Naive thymus-derived CD4-positive, alpha-beta T cell (primary cell): ENCODE measurements at regions of chr17 and their contacts with region 1.

Region 1: GRCh38 chr17:3845621-3846441 is at the start of gene NCBP3:
- DNase-seq: peak; percentile 79 to 98 (median 90)
- ATAC-seq: peak; percentile 98
- H3K4me3 ChIP-seq: peak within 1 kb of the TSS; percentile 83
- H3K4me3 Mint-ChIP-seq: peak within 1 kb of the TSS; percentile 85 to 98 (median 90)
- H3K27ac ChIP-seq: peak within 1 kb of the TSS; percentile 90
- H3K27ac Mint-ChIP-seq: peak within 1 kb of the TSS; percentile 59 to 95 (median 88)
- H3K4me1 ChIP-seq: peaks cover 12 to 17% of the 10 kb centered on the region in 2 donors
- H3K4me1 Mint-ChIP-seq: peaks cover 18 to 33% (median 24%) of the 10 kb centered on the region in 7 donors
- H3K27me3 ChIP-seq: no peaks in the 10 kb centered on the region
- H3K27me3 Mint-ChIP-seq: peaks cover 0 to 13% (median 0%) of the 10 kb centered on the region in 5 donors
- total RNA-seq, gene NCBP3: 40.6 to 49.4 (median 46.7) TPM

Region 2: DNA sequence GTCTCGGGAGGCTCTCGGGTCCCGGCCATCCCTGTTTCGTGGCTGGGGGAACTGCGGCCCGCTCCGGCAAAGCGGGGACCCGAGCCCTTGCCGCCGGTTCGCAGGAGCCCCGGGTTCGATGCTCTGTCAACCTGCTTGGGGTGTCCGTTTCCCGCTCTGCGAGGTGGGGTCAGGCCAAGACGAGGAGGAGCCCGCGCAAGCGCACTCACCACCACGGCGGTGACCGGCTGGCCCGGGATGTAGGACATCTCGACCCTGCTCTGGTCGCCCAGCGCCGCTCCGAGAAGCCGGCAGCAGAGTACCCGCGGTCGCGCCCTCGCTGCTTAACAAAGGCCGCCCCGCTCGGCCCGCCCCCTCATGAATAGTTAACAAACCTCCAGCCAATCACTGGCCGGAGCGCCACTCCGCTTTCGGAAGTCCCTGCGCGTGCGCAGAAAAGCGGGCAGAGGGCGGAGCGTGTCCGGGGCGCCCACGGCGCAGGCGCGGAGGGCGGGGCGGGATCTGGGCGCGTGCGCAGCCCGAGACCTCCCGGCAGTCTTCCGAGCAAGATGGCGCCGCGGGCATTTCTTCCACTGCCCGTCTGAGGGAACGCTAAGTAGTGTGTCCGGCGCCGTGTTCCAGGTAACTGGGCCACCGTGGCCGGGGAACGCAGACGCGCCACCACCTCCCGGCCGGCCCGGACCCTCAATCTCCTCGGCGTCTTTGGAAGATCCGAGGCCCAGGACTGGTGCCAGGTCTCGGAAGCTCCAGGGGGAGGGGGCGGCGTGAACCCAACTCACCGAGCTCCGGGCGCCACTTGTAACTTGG is 177.3 kb before region 1 on chr17 and contains the starts of genes EMC6 and TAX1BP3:
- CTCF ChIA-PET with region 1: no interaction called
- POLR2A ChIA-PET with region 1: no interaction called
- intact Hi-C with region 1: loop called (anchors 1 kb)
- DNase-seq: peak; percentile 97 to 100 (median 100)
- ATAC-seq: peak; percentile 96
- H3K4me3 ChIP-seq: peak within 1 kb of the TSS; percentile 91
- H3K4me3 Mint-ChIP-seq: peak within 1 kb of the TSS; percentile 82 to 94 (median 91)
- H3K27ac ChIP-seq: peak within 1 kb of the TSS; percentile 76
- H3K27ac Mint-ChIP-seq: peak within 1 kb of the TSS; percentile 63 to 93 (median 85)
- H3K4me1 ChIP-seq: peaks cover 8 to 17% of the 10 kb centered on the region in 2 donors
- H3K4me1 Mint-ChIP-seq: peaks cover 21 to 43% (median 30%) of the 10 kb centered on the region in 7 donors
- H3K27me3 ChIP-seq: no peaks in the 10 kb centered on the region
- H3K27me3 Mint-ChIP-seq: peaks cover 0 to 2% (median 0%) of the 10 kb centered on the region in 5 donors
- total RNA-seq, gene EMC6: 23.1 to 39.0 (median 31.2) TPM
- total RNA-seq, gene TAX1BP3: 10.5 to 28.4 (median 11.7) TPM

Region 3: DNA sequence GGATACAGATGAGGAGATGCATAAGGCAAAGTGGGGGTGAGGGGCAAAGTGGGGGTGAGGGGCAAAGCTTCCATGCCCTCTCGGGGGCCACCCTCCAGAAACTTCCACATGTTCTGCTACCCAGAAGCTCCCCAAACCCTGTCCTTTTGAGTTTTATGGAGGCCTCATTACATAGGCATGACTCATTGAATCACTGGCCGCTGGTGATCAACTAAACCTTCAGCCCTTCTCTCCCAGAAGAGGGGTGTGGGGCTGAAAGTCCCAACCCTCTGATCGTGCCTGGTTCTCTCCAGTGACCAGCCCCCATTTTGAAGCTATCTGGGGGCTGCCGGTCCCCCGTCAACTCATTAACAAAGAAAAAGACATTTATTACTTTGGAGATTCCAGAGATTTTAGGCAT is 72.3 kb before region 1 on chr17:
- CTCF ChIA-PET with region 1: no interaction called
- POLR2A ChIA-PET with region 1: no interaction called
- intact Hi-C with region 1: no loop called
- DNase-seq: no peak
- ATAC-seq: no peak
- H3K4me3 ChIP-seq: no peak overlapping the region
- H3K4me3 Mint-ChIP-seq: no peak overlapping the region
- H3K27ac ChIP-seq: no peak overlapping the region
- H3K27ac Mint-ChIP-seq: no peak overlapping the region
- H3K4me1 ChIP-seq: peaks cover 8 to 36% of the 10 kb centered on the region in 2 donors
- H3K4me1 Mint-ChIP-seq: peaks cover 10 to 38% (median 25%) of the 10 kb centered on the region in 7 donors
- H3K27me3 ChIP-seq: no peaks in the 10 kb centered on the region
- H3K27me3 Mint-ChIP-seq: peaks cover 0 to 5% (median 0%) of the 10 kb centered on the region in 5 donors

Region 4: GRCh38 chr17:3893003-3893719 is 47.3 kb after region 1 on chr17 and contains the start of gene CAMKK1:
- CTCF ChIA-PET with region 1: no interaction called
- POLR2A ChIA-PET with region 1: interaction called, 7 read pairs
- intact Hi-C with region 1: loop called (anchors 1 kb)
- DNase-seq: peak; percentile 71 to 96 (median 85)
- ATAC-seq: peak; percentile 87
- H3K4me3 ChIP-seq: peak within 1 kb of the TSS; percentile 70
- H3K4me3 Mint-ChIP-seq: peak within 1 kb of the TSS; percentile 81 to 90 (median 86)
- H3K27ac ChIP-seq: peak within 1 kb of the TSS; percentile 77
- H3K27ac Mint-ChIP-seq: peak within 1 kb of the TSS; percentile 73 to 93 (median 88)
- H3K4me1 ChIP-seq: peaks cover 11 to 23% of the 10 kb centered on the region in 2 donors
- H3K4me1 Mint-ChIP-seq: peaks cover 23 to 45% (median 35%) of the 10 kb centered on the region in 7 donors
- H3K27me3 ChIP-seq: no peaks in the 10 kb centered on the region
- H3K27me3 Mint-ChIP-seq: peaks cover 0 to 7% (median 0%) of the 10 kb centered on the region in 5 donors
- total RNA-seq, gene CAMKK1: 4.8 to 12.5 (median 6.3) TPM

Region 5: DNA sequence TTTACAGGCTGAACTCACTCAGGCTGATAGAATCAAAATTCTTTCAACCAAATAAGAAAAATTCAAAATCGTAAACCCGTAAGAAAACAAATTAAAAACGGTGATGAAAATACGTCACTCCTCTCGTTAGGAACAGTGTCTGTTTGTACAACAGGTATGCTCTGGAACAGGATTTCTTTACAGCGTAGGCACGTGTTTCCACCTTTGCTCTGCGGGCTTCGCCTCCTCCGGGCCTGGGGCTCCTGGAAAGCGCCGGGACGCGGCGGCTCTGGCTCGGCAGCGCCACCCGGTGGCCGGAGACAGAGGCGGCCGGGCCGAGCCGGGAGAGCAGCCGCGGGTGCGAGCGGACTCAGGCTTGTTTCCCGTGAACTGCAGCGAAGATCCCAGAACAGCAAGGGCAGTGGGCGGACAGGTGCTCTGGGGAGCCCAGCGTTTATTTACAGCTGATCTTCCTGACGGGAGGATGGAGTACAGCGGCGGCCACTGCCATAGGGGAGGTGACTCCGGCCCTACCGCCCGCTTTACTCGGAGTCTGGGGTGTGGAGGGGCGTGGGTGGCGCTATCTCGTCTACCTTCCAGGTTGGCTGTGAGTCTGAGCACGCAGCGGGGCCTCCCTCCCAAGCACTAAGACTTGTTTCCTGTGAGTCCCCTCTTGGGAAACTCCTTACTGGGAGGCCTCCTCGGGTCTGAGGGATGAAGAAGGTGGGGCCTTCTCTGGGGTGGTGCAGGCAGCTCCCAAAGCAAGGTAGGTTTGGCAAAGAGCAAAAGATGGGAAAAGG is 158.9 kb after region 1 on chr17:
- CTCF ChIA-PET with region 1: no interaction called
- POLR2A ChIA-PET with region 1: no interaction called
- intact Hi-C with region 1: loop called in 1 of 2 experiments (anchors 1 kb)
- DNase-seq: peak; percentile 32 to 80 (median 64)
- ATAC-seq: peak; percentile 68
- H3K4me3 ChIP-seq: no peak overlapping the region
- H3K4me3 Mint-ChIP-seq: no peak overlapping the region
- H3K27ac ChIP-seq: no peak overlapping the region
- H3K27ac Mint-ChIP-seq: peak overlapping the region in 2 of 9 donors; percentile 65
- H3K4me1 ChIP-seq: peaks cover 0 to 7% of the 10 kb centered on the region in 2 donors
- H3K4me1 Mint-ChIP-seq: peaks cover 4 to 17% (median 7%) of the 10 kb centered on the region in 7 donors
- H3K27me3 ChIP-seq: no peaks in the 10 kb centered on the region
- H3K27me3 Mint-ChIP-seq: no peaks in the 10 kb centered on the region